Gastrocnemius medialis (tissue), 4 donors: ENCODE measurements at regions of chr4 and their contacts with region 1.

Region 1: DNA sequence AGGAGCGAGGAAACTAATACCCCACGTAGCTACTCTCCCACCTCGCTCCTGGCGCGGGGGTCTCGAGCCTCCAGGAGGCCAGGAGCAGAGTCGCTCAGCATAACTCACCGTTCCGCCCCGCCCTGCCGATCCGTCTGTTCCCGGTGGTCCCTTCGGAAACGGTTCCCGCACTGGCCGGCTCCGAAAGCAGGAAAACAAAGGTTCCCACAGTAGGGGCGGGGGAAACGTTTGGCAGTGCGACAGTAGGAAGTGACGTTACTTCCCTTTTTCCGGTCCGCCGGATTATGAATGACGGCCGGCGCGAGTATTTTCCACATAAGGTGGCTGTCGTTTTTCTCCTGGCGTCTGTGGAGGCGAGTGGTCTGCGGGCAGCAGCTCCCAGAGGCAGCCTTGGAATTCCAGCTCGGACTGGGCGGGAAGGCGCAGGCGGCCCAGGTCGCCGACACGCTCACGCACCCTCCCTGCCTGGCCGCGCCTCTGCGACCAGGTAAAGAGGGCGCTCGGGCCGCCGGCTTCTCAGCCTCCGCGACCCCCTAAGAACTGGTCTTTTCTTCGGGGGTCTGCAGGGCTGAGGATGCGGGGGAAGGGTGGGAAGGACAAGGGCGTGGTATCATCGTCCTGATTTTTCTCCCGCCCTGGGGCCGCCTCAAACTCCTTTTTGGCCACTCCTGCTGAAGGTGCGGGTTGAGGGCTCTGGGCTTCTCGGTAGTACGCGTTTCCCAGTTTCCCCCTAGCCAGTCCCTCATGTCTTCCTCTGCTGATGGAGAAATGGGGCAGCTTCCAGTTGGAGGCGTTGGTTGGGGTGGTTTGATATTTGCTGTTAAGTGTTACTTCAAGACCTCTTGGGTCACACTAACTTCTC is at the starts of genes GSTCD and INTS12:
- DNase-seq: peak; percentile 84 to 86
- ATAC-seq: peak; percentile 98 to 99
- H3K4me3 ChIP-seq: peak within 1 kb of the TSS; percentile 91 to 98 (median 94)
- H3K27ac ChIP-seq: peak within 1 kb of the TSS; percentile 89 to 93 (median 91)
- H3K4me1 ChIP-seq: peaks cover 18 to 30% of the 10 kb centered on the region in 2 donors
- H3K27me3 ChIP-seq: no peaks in the 10 kb centered on the region
- CTCF ChIP-seq: no peak
- POLR2A ChIP-seq: peak; percentile 48 to 57
- total RNA-seq, gene GSTCD: 1.8 to 15.0 (median 5.6) TPM
- total RNA-seq, gene INTS12: 16.7 to 27.3 (median 24.4) TPM

Region 2: GRCh38 chr4:105146276-105147015 is 562.3 kb before region 1 on chr4 and contains the start of gene TET2:
- in situ Hi-C with region 1: loop called in 2 of 4 experiments (anchors 25 kb)
- intact Hi-C with region 1: loop called (anchors 2 kb)
- DNase-seq: peak; percentile 54 to 70
- ATAC-seq: peak; percentile 69 to 75
- H3K4me3 ChIP-seq: peak within 1 kb of the TSS; percentile 76 to 93 (median 84)
- H3K27ac ChIP-seq: peak within 1 kb of the TSS; percentile 86 to 91 (median 88)
- H3K4me1 ChIP-seq: peaks cover 28 to 30% of the 10 kb centered on the region in 2 donors
- H3K27me3 ChIP-seq: no peaks in the 10 kb centered on the region
- CTCF ChIP-seq: peak in 2 of 5 experiments; percentile 13 to 21
- POLR2A ChIP-seq: peak; percentile 77 to 85
- total RNA-seq, gene TET2: 12.9 to 18.0 (median 16.4) TPM

Region 3: DNA sequence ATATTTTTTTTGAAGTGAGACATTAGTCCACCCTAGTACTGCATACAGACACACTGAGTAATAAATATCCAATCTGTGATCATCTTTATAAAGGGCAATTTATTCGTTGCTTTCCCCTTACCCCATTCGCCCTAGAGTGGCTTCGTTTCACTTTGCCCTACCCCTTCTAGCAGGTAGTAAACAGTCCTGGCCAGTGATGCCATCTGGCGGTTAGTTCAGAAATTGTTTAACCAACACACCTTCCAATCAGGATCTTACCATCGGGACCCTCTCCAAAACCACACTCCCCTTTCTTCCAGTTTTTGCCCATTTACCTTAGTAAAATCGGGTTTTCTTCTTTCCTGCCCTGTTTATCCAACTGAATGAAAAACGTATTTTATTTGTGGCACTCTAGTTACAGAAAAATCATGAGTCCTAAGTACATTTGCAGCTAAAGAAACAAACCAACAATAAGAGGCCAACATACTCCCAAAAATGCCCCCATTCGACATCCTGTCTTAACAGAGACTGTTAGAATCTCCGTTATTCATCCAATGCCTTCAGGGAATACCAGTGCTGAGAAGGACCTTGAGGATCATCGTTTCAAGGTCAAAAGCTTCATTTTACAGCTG is 237.1 kb before region 1 on chr4:
- in situ Hi-C with region 1: no loop called
- intact Hi-C with region 1: loop called (anchors 2 kb)
- DNase-seq: peak; percentile 48 to 62
- ATAC-seq: peak; percentile 41 to 63
- H3K4me3 ChIP-seq: peak overlapping the region; percentile 24 to 96 (median 62)
- H3K27ac ChIP-seq: peak overlapping the region; percentile 98 to 99 (median 98)
- H3K4me1 ChIP-seq: peaks cover 20 to 29% of the 10 kb centered on the region in 2 donors
- H3K27me3 ChIP-seq: no peaks in the 10 kb centered on the region
- CTCF ChIP-seq: peak; percentile 57 to 78 (median 64)
- POLR2A ChIP-seq: no peak

Region 4: DNA sequence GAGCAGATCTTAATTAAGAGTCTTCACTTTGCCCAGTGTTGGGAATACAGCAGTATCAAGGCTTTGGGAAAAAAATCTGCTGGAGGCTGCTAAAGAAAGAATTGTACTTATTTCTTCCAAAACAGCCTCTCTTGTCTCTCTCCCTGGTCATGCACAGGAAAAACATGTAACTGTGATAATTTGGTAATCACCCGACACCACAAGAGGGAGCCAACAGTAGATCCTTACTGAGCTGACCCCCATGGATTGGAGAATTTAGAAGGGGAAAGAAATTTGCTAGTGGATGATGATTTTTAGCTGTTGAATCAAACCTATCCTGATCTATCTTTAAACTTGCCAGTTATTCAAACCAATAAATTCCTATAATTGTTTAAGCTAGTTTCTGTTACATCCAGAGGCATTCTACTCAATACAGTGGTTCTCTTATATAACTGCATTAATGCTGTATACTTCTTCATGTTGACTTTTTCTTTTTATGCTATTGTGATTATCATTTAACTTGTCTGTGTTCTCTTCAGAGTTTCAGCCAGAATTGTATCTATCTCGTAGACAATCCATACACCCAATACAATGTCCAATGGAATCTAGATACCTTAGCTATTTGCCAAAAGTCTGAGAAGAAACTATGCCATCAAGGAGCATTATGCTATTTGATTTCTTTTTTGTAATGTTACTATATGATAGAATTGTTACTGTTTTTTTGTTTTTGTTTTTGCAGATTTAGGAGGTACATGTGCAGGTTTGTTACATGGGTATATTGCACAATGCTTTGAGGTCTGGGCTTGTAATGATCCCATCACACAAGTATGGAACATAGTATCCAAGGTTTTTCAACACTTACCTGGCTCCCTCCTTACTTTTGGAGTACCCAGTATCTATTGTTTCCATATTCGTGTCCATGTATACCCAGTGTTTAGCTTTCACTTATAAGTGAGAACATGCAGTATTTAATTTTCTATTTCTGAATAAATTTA is 187.7 kb before region 1 on chr4:
- in situ Hi-C with region 1: loop called in 2 of 4 experiments (anchors 10 to 25 kb)
- intact Hi-C with region 1: no loop called
- DNase-seq: no peak
- ATAC-seq: no peak
- H3K4me3 ChIP-seq: no peak overlapping the region
- H3K27ac ChIP-seq: no peak overlapping the region
- H3K4me1 ChIP-seq: no peaks in the 10 kb centered on the region
- H3K27me3 ChIP-seq: no peaks in the 10 kb centered on the region
- CTCF ChIP-seq: peak; percentile 4 to 59 (median 29)
- POLR2A ChIP-seq: no peak

Region 5: DNA sequence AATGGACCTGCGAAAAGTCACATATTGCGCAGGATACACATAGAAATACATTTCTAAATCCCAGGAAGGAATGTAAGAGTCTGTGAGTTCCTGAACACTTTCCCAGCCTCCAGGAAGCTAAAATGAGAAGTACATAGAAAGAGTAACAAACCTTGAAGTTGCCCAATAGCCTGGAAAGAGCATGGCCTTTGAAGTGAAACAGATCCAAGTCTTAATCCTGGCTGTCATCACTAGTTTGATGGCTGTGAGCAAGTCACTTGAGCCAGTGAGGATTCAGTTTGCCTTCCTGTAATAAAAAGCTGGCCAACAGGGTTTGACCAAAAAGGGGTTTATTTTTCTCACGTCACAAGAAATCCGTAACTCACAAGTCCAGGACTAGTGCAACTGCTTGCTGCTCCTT is 86.5 kb before region 1 on chr4:
- in situ Hi-C with region 1: no loop called
- intact Hi-C with region 1: loop called (anchors 2 kb)
- DNase-seq: peak; percentile 12 to 27
- ATAC-seq: peak; percentile 92 to 95
- H3K4me3 ChIP-seq: no peak overlapping the region
- H3K27ac ChIP-seq: no peak overlapping the region
- H3K4me1 ChIP-seq: peaks cover 4 to 29% of the 10 kb centered on the region in 2 donors
- H3K27me3 ChIP-seq: no peaks in the 10 kb centered on the region
- CTCF ChIP-seq: no peak
- POLR2A ChIP-seq: no peak

Region 6: GRCh38 chr4:106315968-106316772 is 607.4 kb after region 1 on chr4 and contains the starts of genes AIMP1 and TBCK:
- in situ Hi-C with region 1: no loop called
- intact Hi-C with region 1: loop called (anchors 1 kb)
- DNase-seq: peak; percentile 86 to 87
- ATAC-seq: peak; percentile 96 to 97
- H3K4me3 ChIP-seq: peak within 1 kb of the TSS; percentile 89 to 94 (median 91)
- H3K27ac ChIP-seq: peak within 1 kb of the TSS; percentile 89 to 97 (median 96)
- H3K4me1 ChIP-seq: peaks cover 30 to 38% of the 10 kb centered on the region in 2 donors
- H3K27me3 ChIP-seq: no peaks in the 10 kb centered on the region
- CTCF ChIP-seq: no peak
- POLR2A ChIP-seq: peak; percentile 62 to 76
- total RNA-seq, gene AIMP1: 23.2 to 30.0 (median 27.4) TPM
- total RNA-seq, gene TBCK: 8.1 to 17.7 (median 12.2) TPM